Testis (tissue), 5 donors: ENCODE measurements at regions of chr19 and their contacts with region 1.

Region 1: DNA sequence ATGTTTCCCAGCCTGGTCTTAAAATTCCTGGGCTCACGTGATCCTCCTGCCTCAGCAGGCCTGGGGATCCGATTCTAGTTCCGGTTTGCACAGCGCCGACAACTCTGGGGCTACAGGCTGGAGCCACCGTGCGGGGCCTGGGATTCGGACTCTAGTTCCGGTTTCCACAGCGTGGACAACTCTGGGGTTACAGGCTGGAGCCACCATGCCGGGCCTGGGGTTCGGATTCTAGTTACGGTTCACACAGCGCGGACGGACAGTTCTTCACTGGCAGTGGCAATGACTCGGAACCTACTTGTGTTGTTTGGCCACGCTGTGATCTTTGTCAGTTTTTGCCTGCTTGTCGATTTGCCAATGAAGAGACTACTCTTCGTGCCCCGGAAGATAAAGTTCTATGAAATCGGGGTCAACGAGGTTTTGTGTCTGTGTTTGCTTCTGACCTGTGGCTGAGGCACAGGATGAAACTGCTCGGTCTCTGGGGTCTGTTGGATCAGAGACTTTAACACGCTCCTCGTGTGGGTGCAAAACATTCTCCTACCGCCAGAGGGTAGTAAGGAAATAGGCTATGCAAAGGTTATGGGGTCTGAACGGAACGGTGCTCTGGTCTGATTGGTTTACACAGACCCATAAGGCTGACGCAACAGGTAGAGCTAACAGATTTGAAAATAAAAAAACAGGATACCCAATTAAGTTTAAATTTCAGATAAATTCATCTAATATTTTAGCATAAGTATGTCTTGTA is 12.1 kb upstream of the ZSCAN1 start:
- DNase-seq: peak; percentile 80
- H3K4me3 ChIP-seq: peak overlapping the region in 1 of 2 donors; percentile 18
- H3K27ac ChIP-seq: no peak overlapping the region
- H3K4me1 ChIP-seq: no peaks in the 10 kb centered on the region
- H3K27me3 ChIP-seq: no peaks in the 10 kb centered on the region
- CTCF ChIP-seq: peak; percentile 56 to 69 (median 66)
- POLR2A ChIP-seq: no peak

Region 2: DNA sequence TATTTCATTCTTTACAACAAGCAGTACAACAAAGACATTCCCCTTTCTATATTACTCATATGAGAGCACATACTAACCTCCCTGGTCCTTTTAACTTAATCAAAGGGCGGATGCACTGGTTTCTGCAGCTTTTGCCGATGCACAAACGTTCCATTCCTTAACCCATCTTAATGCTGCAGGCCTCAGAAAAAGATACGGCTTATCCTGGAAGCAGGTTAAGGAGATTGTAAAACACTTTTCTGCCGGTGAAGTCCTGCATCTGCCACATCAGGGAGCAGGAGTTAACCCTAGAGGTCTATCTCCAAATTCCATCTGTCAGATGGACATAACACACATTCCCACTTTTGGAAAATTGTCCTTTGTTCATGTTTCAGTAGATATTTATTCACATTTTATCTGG is 121.4 kb before region 1 on chr19:
- intact Hi-C with region 1: no loop called
- DNase-seq: no peak
- H3K4me3 ChIP-seq: no peak overlapping the region
- H3K27ac ChIP-seq: no peak overlapping the region
- H3K4me1 ChIP-seq: no peaks in the 10 kb centered on the region
- H3K27me3 ChIP-seq: no peaks in the 10 kb centered on the region
- CTCF ChIP-seq: no peak
- POLR2A ChIP-seq: no peak

Region 3: DNA sequence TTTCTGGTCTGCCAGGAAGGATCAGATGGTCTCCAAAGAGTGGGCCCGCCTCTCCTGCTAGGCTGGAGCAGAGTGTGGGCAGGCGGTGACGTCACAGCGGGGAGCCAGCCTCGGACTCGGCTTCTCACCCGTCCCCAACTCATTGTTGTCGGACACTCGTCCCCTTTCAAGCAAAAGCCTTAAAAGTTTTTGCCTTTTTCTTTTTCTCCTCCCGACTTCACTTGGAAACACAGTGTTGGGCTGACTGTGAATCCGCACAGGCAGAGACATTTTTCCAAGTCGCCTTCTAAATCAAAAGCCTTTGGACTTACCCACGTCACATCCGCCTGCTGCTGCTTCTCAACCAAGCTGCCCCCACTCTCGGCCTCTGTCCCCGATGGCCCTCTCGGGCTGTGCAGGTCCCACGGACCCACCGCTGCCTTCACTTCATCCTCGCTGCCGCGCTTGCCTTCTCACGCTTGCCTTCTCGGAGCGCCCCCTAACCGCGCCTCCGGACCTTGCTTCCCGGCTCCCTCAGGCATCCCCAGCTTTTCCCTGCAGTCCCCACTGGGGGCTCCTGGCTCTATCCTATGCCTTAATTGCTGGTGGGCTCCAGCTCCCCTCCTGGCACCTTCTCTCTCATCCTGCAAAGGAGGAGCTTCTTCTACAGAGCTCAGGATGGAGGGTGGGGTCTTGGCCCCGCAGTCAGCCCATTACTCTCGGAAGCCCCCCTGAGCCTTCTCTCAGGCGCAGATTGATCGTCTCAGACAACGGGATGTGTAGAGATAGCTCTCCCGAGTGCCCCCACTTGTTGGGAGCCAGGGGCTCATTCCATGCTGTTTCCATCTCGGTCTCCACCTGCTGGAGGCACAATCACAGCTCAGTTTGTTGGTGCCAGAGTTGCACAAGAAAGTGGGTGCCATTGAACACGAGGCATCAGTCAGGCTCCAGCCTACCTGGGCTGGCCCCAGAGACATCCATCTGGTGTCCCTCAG is 33.5 kb after region 1 on chr19:
- intact Hi-C with region 1: no loop called
- DNase-seq: peak; percentile 67
- H3K4me3 ChIP-seq: peak overlapping the region; percentile 34 to 54
- H3K27ac ChIP-seq: peak overlapping the region; percentile 53
- H3K4me1 ChIP-seq: peaks cover 8% of the 10 kb centered on the region
- H3K27me3 ChIP-seq: no peaks in the 10 kb centered on the region
- CTCF ChIP-seq: no peak
- POLR2A ChIP-seq: no peak

Region 4: GRCh38 chr19:58154679-58155648 is 133.3 kb after region 1 on chr19:
- intact Hi-C with region 1: loop called (anchors 10 kb)
- DNase-seq: peak; percentile 95
- H3K4me3 ChIP-seq: peak overlapping the region; percentile 74 to 83
- H3K27ac ChIP-seq: peak overlapping the region; percentile 71 to 75
- H3K4me1 ChIP-seq: peaks cover 11% of the 10 kb centered on the region
- H3K27me3 ChIP-seq: no peaks in the 10 kb centered on the region
- CTCF ChIP-seq: peak; percentile 94 to 99 (median 99)
- POLR2A ChIP-seq: no peak

Region 5: DNA sequence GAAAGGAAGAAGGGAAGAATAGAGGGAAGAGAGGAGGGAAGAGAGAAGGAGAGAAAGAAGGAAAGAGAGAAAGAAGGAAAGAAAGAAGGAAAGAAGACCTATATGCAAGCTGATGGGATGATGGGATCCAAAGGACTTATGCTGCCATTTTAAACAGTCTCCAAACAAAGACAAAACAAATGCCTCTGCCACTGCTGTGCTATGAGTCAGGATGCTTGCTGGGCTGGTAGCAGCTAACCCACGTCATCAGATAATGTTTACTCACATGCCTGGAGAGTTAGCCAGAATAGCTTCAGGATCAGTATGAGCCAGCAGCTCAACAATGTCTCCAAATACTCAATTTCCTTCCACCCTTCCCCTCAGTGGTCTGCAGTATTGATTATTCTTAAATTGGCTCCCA is 149.1 kb after region 1 on chr19:
- intact Hi-C with region 1: no loop called
- DNase-seq: no peak
- H3K4me3 ChIP-seq: no peak overlapping the region
- H3K27ac ChIP-seq: no peak overlapping the region
- H3K4me1 ChIP-seq: no peaks in the 10 kb centered on the region
- H3K27me3 ChIP-seq: no peaks in the 10 kb centered on the region
- CTCF ChIP-seq: no peak
- POLR2A ChIP-seq: no peak